ENCODE measurements at regions of chr16 and their contacts with region 1.

Region 1: GRCh38 chr16:50354629-50355456 is 13.9 kb downstream of the BRD7 start:
- DNase-seq: no peak
- H3K4me3 ChIP-seq: no peak overlapping the region
- CTCF ChIP-seq: peak; percentile 23

Region 2: DNA sequence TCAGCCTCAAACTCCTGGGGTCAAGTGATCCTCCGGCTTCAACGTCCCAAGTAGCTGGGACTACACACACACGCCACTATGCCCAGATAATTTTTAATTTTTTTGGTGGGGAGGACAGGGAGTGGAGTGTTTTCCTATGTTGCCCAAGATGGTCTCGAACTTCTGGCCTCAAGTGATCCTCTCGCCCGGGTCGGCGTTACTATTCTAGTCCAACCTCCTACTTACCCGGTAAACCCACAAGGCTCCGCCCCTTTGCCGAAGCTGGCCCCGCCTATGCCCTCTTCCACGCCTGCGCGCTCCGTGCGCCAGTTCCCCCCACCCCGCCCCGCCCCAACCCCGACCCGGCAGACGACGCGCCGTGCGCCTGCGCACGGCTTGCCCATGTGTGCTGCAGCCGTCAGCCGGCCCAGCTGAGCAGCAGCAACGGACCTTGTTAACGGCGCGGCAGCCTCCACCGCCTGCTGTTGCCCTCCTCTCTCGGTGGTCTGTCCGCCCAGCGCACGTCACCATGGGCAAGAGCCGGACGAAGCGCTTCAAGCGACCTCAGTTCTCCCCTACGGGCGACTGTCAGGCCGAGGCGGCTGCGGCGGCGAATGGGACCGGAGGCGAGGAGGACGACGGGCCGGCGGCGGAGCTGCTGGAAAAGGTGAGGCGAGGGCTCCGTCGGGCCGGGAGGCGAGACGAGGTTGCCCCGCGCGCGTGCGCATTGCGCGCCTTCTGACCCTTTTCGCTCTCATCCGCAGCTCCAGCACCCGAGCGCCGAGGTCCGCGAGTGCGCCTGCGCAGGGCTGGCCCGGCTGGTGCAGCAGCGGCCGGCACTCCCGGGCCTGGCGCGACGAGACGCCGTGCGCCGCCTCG is 289.0 kb before region 1 on chr16 and contains the start of gene HEATR3:
- CTCF ChIA-PET with region 1: interaction called, 35 read pairs
- POLR2A ChIA-PET with region 1: no interaction called
- DNase-seq: peak; percentile 53
- H3K4me3 ChIP-seq: peak within 1 kb of the TSS; percentile 100
- CTCF ChIP-seq: no peak

Region 3: DNA sequence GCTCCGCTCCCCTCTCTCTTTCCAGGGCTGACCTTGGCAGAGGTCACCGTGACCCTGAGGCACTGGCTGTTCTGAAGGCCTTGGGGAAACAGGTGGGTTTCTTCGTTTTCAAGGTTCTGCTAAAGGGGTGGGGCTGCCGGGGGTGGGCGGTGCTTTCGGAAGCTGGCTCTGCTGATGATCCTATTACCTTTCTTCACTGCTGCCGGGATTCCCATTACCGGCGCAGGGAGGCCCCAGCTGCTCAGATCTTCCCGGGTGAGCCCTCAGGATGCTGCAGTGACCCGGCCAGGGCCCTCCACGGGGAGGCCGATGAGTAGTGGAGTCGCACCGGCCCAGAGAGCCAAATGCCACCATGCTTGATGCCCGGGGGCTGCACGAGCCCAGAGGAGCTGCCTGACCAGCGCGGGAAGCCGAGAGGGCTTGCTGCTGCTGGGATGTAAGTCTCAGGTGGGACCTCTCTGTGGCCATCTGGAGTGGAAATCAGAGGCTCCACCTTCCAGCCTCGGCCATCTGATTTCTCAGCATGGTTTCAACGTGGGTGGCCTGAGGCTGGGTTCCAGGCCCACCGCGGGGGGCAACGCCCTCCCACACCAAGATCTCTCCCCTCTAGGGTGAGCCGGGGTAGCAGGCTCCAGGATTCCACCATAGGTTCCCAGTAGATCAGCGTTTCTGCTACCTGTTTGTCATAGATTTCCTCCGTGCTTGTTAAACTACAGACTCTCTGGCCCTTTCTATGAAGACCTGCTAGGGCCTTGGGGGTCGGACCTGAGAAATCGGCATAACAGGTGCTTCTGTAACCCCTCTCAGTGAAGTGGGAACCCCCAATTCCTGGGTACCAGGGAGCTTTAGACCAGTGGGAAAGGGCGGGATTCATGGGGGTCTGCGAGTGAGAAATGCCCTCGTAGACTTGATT is 110.1 kb before region 1 on chr16:
- CTCF ChIA-PET with region 1: interaction called, 18 read pairs
- POLR2A ChIA-PET with region 1: no interaction called
- DNase-seq: no peak
- H3K4me3 ChIP-seq: no peak overlapping the region
- CTCF ChIP-seq: no peak

Region 4: GRCh38 chr16:50335196-50335958 is 19.5 kb before region 1 on chr16:
- CTCF ChIA-PET with region 1: interaction called, 16 read pairs
- POLR2A ChIA-PET with region 1: no interaction called
- DNase-seq: no peak
- H3K4me3 ChIP-seq: no peak overlapping the region
- CTCF ChIP-seq: no peak